Endothelial cell of umbilical vein (primary cell): ENCODE measurements at regions of chr12 and their contacts with region 1.

Region 1: DNA sequence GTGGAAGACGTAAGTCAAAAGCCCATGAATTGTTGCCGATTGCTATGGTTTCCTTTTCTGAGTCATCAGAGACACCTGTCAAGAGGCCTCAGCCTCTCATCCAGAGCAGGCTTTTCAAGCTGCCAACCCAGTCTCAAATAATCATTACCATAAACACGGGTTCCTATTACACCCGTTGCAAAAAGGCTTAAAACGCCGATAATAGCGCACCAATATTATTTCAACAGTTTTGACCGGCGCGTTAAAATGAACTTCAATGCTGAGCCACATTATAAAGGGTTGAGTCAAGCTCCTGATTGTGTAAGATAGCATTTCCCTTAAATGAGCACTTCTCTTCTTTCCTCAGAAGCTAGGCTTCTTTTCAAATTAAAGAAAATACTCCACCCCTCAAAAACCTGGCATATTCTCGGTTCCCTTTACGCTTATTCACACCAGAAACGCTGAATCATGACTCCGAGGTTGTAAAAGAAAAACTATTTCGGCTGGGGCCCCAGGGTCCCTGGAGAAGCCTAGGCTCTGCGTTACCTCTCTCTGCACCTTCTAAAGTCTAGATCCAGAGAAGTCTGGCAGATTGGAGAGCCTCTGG is 1.4 kb downstream of the TMTC1 start:
- DNase-seq: peak; percentile 63
- H3K4me3 ChIP-seq: peak overlapping the region; percentile 32 to 71 (median 60)
- H3K27ac ChIP-seq: no peak overlapping the region
- H3K4me1 ChIP-seq: peaks cover 16% of the 10 kb centered on the region
- H3K27me3 ChIP-seq: peaks cover 4 to 15% of the 10 kb centered on the region in 2 experiments
- CTCF ChIP-seq: no peak
- POLR2A ChIP-seq: no peak

Region 2: GRCh38 chr12:29743801-29744200 is 38.6 kb before region 1 on chr12:
- CTCF ChIA-PET with region 1: no interaction called
- POLR2A ChIA-PET with region 1: no interaction called
- dilution Hi-C with region 1: no loop called
- intact Hi-C with region 1: loop called (anchors 1 kb)
- DNase-seq: peak; percentile 39
- H3K4me3 ChIP-seq: no peak overlapping the region
- H3K27ac ChIP-seq: no peak overlapping the region
- H3K4me1 ChIP-seq: peaks cover 19% of the 10 kb centered on the region
- H3K27me3 ChIP-seq: no peaks in the 10 kb centered on the region
- CTCF ChIP-seq: no peak
- POLR2A ChIP-seq: no peak

Region 3: DNA sequence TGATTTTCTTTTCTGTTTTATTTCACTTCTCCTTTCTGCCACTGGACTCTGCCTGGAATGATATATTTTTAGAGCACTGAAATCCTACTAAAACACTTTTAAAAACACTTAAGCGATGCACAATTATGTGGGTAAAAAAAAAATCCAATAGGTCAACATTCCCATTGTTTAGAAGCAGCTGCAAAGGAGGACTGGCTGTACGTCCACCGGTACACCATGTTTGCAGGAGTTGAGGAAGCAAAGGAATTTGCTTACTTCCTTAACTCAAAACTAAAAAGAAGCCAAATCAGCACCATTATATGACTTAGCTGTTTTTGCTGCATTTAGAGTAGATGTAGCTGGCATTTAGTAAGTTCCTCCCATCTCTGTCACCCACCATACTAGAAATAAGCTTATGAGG is 188.1 kb after region 1 on chr12:
- CTCF ChIA-PET with region 1: no interaction called
- POLR2A ChIA-PET with region 1: no interaction called
- dilution Hi-C with region 1: no loop called
- intact Hi-C with region 1: loop called (anchors 2 kb)
- DNase-seq: peak; percentile 90
- H3K4me3 ChIP-seq: no peak overlapping the region
- H3K27ac ChIP-seq: peak overlapping the region; percentile 79
- H3K4me1 ChIP-seq: peaks cover 21% of the 10 kb centered on the region
- H3K27me3 ChIP-seq: no peaks in the 10 kb centered on the region
- CTCF ChIP-seq: no peak
- POLR2A ChIP-seq: no peak

Region 4: GRCh38 chr12:30286345-30286926 is 504.1 kb after region 1 on chr12:
- CTCF ChIA-PET with region 1: no interaction called
- POLR2A ChIA-PET with region 1: no interaction called
- dilution Hi-C with region 1: no loop called
- intact Hi-C with region 1: loop called (anchors 10 kb)
- DNase-seq: peak; percentile 64
- H3K4me3 ChIP-seq: no peak overlapping the region
- H3K27ac ChIP-seq: no peak overlapping the region
- H3K4me1 ChIP-seq: no peaks in the 10 kb centered on the region
- H3K27me3 ChIP-seq: peaks cover 4 to 5% of the 10 kb centered on the region in 2 experiments
- CTCF ChIP-seq: peak; percentile 40 to 48
- POLR2A ChIP-seq: no peak

Region 5: GRCh38 chr12:31106101-31106803 is 1323.9 kb after region 1 on chr12:
- CTCF ChIA-PET with region 1: no interaction called
- POLR2A ChIA-PET with region 1: no interaction called
- dilution Hi-C with region 1: no loop called
- intact Hi-C with region 1: no loop called
- DNase-seq: no peak
- H3K4me3 ChIP-seq: no peak overlapping the region
- H3K27ac ChIP-seq: no peak overlapping the region
- H3K4me1 ChIP-seq: peaks cover 4% of the 10 kb centered on the region
- H3K27me3 ChIP-seq: no peaks in the 10 kb centered on the region
- CTCF ChIP-seq: no peak
- POLR2A ChIP-seq: no peak